Pancreas (tissue), 10 donors: ENCODE measurements at regions of chr7 and their contacts with region 1.

Region 1: GRCh38 chr7:117212969-117213877 is 109.6 kb downstream of the WNT2 start:
- DNase-seq: peak in 3 of 6 donors; percentile 45 to 61 (median 52)
- ATAC-seq: peak in 3 of 4 donors; percentile 82 to 89 (median 87)
- H3K4me3 ChIP-seq: no peak overlapping the region
- H3K27ac ChIP-seq: no peak overlapping the region
- H3K4me1 ChIP-seq: no peaks in the 10 kb centered on the region
- H3K27me3 ChIP-seq: no peaks in the 10 kb centered on the region
- CTCF ChIP-seq: peak; percentile 70 to 89 (median 76)

Region 2: DNA sequence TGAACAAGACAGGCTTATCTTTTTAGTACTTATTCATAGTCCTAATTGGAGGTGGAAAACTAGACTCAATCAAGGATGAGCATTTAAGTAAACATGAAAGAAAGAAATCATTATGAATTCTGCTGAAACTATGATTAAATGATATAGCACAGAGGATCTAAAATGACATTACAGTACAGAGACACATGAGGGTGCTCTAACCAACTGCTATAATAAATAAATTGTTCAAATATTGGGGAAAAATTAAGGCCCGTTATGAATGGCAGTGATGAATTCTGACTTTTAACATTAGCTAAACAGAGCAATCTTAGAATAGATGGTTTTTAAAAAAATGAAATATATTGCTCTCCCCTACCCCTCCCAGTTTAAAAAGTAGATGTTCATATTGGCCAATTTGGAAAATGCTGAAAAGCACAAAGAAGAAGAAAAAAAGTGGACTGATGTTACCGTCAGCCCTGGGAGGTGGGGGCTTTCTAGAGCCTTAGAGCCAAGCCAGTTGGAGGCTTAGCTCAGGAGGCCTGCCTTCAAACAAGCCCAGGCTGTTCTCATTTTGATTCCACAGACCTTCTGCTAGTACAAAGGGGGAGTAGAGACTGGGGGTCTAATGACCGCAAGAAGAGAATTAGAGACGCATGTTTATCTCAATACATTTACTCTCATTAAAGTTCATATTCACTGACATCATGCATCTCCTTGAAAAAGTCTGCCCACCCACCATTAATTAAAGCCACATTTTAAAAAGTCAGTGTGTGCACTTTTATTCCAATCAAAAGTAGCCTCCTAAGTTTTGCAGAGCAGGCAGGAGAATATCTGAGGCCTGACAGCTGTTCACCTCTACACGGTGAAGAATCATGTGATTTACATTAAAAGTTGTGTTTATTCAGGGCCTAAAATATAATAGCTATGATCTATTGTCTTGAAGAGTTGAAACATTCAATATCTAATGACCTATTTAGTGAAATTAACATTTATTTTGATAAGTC is 99.7 kb after region 1 on chr7:
- intact Hi-C with region 1: no loop called
- DNase-seq: no peak
- ATAC-seq: no peak
- H3K4me3 ChIP-seq: no peak overlapping the region
- H3K27ac ChIP-seq: no peak overlapping the region
- H3K4me1 ChIP-seq: peaks cover 0 to 6% (median 0%) of the 10 kb centered on the region in 3 donors
- H3K27me3 ChIP-seq: no peaks in the 10 kb centered on the region
- CTCF ChIP-seq: peak in 1 of 4 donors; percentile 13

Region 3: DNA sequence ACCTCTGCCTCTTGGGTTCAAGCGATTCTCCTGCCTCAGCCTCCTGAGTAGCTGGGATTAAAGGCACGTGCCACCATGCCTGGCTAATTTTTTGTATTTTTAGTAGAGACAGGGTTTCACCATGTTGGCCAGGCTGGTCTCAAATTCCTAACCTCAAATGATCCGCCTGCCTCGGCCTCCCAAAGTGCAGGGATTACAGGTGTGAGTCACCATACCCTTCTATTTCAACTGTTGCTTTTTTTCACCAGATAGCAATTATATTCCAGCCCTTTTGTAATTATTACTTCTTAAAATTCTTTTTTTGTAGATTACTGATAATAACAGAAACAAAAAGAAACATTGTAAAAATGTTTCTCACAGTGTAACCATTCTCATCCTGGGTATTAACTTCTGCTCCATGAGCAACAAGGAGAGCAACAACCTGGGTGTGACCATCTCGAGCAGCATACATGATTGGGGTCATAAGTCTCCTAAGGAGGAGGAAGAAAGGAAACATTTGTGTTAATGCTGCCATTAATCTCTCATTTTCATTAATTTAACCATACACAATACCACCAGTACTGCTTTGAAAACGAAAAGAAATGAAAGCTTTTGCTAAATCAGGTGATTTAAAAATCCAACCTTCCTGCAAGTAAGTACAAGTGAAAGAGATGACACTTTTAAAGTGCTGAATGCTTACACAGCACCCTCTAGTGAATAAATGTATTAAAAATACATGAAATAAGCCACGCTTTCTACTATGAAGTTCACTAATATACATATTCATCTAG is 172.3 kb after region 1 on chr7:
- intact Hi-C with region 1: loop called in 1 of 3 experiments (anchors 10 kb)
- DNase-seq: no peak
- ATAC-seq: peak in 3 of 4 donors; percentile 73 to 74 (median 74)
- H3K4me3 ChIP-seq: no peak overlapping the region
- H3K27ac ChIP-seq: no peak overlapping the region
- H3K4me1 ChIP-seq: peaks cover 0 to 8% (median 0%) of the 10 kb centered on the region in 3 donors
- H3K27me3 ChIP-seq: no peaks in the 10 kb centered on the region
- CTCF ChIP-seq: peak in 1 of 4 donors; percentile 9